GM10248 (cell line): ENCODE measurements at regions of chr2 and their contacts with region 1.

Region 1: DNA sequence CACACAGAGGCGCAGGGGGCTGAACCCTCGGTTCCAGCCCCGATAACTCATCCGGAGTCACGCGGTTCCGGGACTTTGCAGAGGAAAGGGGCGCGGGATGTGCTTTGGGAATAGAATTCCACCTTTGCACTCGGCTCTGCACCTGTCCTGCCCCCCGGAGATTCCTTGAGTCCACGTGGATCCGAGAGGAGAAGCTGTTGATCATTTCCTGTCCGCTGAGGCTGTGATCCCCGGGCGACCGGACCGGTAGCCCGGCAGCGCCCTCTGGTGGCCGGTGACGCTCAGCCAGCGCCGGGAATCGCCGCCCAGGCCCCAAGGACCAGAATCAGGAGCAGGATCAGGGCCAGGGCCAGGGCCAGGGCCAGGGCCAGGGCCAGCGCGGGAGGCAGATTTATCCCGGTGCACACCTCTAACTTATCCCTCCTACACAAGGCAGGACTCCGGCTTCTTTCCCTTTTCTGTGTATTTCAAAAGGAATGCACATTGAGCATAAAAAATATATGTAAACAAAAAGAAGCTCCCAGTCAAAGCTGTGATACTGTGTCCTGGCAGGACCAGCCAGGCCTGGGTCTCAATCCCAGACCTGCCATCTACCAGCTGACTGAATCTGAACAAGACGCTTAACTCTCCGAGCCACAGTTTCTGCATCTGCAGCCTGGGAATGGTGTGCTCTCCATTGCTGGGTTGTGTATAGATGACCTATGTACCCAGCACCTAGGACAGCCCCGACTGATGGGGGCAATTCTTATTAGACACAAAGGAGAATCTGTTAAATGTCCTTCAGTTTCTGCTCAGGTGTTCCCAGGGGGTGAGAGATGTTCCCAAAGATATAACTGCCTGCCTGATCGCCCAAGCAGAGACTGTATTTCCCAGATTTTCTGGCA is 8.5 kb upstream of the SPATA3 start:
- DNase-seq: peak; percentile 92
- CTCF ChIP-seq: peak; percentile 96

Region 2: DNA sequence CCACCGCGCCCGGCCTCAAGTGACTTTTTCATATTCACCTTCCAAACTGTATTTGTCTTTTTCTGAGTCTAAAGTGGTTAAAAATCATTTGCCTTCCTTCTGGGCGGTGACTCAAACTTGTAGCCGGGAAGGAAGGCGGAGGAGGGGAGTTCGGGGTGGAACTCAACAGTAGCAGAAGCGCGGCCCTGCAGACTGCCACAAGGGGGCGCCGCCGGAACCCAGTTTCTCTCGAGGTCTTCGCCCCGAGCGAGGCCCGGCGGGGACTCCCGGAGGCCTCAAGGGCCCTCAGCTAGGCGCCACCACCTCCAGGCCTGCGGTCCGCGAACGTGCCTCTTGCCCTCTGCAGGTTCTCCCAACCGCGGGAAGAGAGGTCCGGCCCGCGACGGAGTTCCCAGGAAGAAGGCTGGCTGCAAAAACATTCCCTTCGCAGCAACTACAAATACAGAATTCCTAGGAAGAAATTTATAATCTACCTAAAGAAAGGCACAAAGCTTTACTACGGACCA is 139.4 kb before region 1 on chr2:
- CTCF ChIA-PET with region 1: interaction called, 39 read pairs
- POLR2A ChIA-PET with region 1: interaction called, 6 read pairs
- DNase-seq: peak; percentile 92
- CTCF ChIP-seq: peak; percentile 91

Region 3: DNA sequence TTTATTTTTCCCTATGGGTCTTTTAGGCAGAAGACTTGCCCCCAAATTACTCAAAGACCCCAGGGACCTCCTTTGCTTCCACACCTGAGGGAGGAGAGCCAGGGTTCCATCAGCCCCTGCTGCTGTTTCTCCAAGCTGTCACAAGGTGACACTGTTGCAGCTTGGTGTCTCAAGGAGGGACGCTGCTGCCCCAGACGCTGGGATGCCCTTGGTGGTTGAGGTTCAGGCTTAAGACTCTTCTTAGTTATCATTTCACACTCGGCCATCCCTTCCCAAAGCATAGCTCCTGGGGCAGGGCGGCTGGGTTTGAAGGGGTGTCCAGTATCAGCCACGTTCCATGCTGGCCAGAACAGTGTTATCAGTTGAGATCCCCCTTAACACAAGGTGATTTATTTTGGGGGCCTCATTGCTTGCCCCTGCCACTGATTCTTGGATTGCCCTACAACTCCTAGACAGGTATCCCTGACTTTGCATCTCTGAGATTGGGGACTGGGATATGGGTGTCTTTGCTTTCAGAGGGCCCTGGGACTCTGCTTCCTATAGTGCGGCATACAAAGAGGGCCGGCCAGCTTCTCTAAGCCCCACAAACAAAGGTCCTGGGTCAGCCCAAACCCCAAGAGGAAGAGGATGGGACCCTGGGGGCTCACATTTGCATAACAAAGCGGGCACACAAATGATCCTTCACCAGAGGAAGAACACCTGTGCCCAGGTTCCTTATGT is 85.0 kb before region 1 on chr2:
- CTCF ChIA-PET with region 1: interaction called, 256 read pairs
- POLR2A ChIA-PET with region 1: interaction called, 4 read pairs
- DNase-seq: peak; percentile 77
- CTCF ChIP-seq: peak; percentile 97

Region 4: DNA sequence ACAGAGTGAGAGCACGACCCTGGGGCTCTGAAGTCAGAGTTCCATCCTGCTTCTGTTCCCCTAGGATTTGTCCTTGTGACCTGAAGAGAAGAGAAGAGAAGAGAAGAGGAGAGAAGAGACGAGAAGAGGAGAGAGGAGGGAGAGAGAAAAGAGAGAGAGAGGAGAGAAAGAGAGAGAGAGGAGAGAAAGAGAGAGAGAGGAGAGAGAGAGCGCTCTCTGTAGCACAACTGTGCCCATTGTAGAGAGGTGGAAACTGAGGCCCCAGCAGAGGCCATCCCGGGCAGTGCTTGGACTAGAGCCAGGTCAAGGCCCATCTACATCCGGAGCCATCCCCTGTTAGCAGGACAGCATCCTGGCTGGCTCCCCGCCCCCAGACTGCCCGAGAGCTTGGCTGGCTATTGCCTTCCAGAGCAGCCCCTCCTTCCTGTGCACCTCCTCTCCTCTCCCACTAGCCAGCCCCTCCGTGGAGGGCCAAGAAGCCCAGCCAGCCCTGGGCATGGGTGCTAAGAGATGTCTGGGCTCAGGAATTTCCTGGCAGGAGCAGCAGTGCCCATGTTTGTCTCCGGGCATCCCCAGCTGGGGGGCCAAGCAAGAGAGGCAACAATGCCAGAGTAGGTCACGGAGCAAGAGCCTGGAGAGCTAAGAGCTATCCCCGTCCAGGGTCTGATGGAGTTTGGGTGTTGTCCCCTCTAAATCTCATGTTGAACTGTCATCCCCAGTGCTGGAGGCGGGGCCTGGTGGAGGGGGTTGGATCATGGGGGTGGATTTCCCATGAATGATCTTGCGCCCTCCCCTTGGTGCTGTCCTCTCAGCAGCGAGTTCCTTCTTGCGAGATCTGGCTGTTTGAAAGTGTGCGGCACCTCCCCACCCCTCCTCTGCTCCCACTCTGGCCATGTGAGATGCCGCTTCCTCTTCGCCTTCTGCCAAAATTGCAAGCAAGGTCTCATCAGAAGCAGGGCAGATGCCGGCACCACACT is 44.2 kb before region 1 on chr2:
- CTCF ChIA-PET with region 1: interaction called, 59 read pairs
- POLR2A ChIA-PET with region 1: interaction called, 27 read pairs
- DNase-seq: peak; percentile 83
- CTCF ChIP-seq: no peak

Region 5: DNA sequence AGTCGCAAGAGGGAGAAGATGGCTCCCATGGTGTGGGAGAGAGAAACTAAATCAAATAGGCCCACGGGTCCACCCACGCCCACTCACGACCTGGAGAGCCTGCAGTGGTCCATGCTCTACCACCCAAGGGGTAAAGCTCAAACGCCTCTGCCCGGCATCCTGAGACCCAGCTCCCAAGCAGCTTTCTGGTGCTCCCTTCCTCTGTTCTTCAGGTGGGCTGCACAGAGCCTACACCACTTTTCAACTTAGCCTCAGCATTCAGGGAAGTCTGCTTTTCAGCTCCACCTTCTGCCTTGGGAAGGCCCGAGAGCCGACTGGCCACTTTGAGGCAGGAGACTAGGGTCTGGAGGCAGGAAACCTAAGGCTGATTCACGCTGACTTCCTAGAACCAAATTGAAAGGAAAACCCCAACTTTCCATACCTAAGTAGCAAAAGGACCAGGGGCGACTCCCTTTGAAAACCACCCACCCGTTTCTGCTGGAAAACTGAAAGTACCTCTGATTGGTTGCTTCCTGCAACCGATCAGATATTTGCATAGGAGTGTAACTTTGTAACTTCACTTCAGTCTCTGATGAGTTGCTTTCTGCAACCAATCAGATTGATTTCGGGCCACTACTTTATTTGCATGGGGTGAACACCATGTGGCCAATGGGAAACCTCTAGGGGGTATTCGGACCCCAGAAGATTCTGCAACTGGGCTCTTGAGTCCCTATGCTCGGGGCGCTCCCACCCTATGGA is 18.3 kb before region 1 on chr2:
- CTCF ChIA-PET with region 1: interaction called, 59 read pairs
- POLR2A ChIA-PET with region 1: no interaction called
- DNase-seq: no peak
- CTCF ChIP-seq: no peak

Region 6: GRCh38 chr2:231017231-231017598 is 29.8 kb after region 1 on chr2:
- CTCF ChIA-PET with region 1: interaction called, 10 read pairs
- POLR2A ChIA-PET with region 1: no interaction called
- DNase-seq: no peak
- CTCF ChIP-seq: no peak